Transverse colon (tissue), 4 donors: ENCODE measurements at regions of chr7 and their contacts with region 1.

Region 1: GRCh38 chr7:150799741-150800580 is at the start of gene TMEM176B:
- DNase-seq: peak; percentile 76
- H3K4me3 ChIP-seq: peak within 1 kb of the TSS; percentile 53 to 84 (median 63)
- H3K27ac ChIP-seq: peak within 1 kb of the TSS; percentile 88 to 93 (median 91)
- H3K4me1 ChIP-seq: peaks cover 10 to 47% (median 33%) of the 10 kb centered on the region in 4 donors
- H3K27me3 ChIP-seq: peaks cover 18% of the 10 kb centered on the region
- CTCF ChIP-seq: no peak
- EP300 ChIP-seq: peak; percentile 40
- POLR2A ChIP-seq: peak; percentile 73
- total RNA-seq, gene TMEM176B: 30.4 to 369 (median 224) TPM

Region 2: DNA sequence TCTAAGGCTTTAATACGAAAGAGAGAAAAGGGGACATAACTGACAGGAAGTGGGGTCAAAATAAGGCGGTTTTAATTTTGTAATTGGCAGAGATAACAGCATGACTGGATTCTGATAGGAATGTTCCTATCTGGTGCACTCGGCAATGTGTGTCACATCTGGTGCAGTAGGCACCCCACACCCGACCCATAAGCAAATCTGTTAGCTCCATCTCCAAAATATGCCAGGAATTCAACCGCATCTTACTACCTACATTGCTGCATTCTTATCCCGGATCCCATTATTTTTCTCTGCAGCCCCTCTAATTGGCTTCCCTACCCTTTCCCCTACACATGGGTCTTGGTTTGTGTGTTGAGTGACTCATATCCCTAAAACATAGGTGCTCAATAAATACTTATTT is 1206.4 kb after region 1 on chr7:
- in situ Hi-C with region 1: no loop called
- intact Hi-C with region 1: loop called (anchors 5 kb)
- DNase-seq: no peak
- H3K4me3 ChIP-seq: no peak overlapping the region
- H3K27ac ChIP-seq: no peak overlapping the region
- H3K4me1 ChIP-seq: no peaks in the 10 kb centered on the region
- H3K27me3 ChIP-seq: no peaks in the 10 kb centered on the region
- CTCF ChIP-seq: no peak
- EP300 ChIP-seq: no peak
- POLR2A ChIP-seq: no peak